ENCODE measurements at regions of chr5 and their contacts with region 1.

Region 1: GRCh38 chr5:171418316-171418981 is 998 bp upstream of the FGF18 start:
- DNase-seq: peak; percentile 60 to 85
- H3K4me3 ChIP-seq: peak overlapping the region; percentile 25
- H3K4me1 ChIP-seq: peaks cover 2% of the 10 kb centered on the region; the same call in 1 of the 2 replicates
- H3K27me3 ChIP-seq: peaks cover 10% of the 10 kb centered on the region

Region 2: DNA sequence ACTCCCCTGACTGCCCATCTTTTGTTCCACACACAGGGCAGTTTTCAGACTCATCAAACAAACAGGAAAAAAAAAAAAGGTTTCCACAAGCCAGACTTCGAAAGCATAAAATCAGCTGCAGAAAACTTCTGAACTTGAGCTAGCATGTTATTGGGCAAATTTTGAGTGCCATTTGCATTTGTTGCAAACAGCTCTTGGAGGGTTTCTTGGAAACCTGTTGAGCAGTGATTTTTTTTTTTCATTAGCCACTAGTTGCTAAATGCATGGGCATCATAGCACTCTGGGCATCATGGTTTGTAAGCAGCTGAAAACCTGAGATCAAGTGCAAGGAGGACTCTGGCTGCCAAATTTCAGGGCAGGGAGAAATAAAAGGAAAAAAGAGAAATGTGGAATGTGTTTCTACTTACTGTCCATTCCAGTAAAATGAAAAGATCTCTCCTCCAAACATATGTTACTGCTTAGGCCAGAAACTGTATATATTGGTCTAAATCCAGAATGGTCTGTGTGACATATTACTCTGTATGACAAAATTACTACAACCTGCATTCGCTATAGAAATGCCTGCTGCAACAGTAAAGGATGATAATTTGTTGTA is 282.0 kb after region 1 on chr5:
- in situ Hi-C with region 1: no loop called
- DNase-seq: no peak
- H3K4me3 ChIP-seq: no peak overlapping the region
- H3K4me1 ChIP-seq: no peaks in the 10 kb centered on the region
- H3K27me3 ChIP-seq: no peaks in the 10 kb centered on the region

Region 3: DNA sequence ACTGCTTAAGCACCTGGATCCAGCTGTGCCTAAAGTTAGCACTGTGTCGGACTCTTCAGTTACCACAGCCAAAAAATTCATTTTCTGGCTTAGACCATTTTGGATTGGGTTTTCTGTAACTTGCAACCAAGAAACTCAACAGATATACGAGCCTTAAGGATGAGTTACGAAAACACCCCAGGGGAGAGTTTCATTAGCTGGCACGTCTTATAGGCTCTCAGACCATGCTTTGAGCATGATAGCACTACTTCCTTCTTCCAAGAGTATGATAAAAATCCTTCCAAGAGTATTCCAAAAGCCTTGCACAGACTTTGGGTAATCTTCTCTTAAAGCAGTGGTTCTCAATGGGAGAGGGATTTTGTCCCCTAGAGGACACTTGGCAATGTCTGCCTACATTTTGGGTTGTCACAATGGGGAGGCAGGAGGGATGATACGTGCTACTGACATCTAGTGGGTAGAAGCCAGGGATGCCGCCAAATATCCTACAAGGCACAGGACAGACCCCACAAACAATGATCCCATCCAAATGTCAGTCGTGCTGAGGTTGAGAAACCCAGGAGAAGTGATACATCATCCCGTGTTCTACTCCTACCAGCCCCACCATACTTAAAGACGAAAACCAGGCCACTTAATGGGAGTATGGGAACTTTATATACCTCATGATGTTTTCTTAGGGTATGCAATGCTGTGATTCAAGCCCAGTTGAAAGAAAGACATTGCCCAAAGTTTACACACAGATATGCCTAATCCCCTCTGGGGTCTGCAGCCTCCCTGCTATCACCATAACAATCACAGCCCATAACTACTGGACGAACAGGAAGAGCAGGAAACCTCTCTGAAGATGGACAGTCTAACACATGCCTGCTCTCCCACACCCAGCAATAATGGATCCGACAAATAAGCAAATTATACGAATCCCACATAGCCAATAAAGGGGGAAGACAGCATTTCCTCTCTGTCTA is 432.2 kb after region 1 on chr5:
- in situ Hi-C with region 1: loop called (anchors 10 kb)
- DNase-seq: peak; percentile 20 to 41
- H3K4me3 ChIP-seq: no peak overlapping the region
- H3K4me1 ChIP-seq: no peaks in the 10 kb centered on the region
- H3K27me3 ChIP-seq: no peaks in the 10 kb centered on the region

Region 4: DNA sequence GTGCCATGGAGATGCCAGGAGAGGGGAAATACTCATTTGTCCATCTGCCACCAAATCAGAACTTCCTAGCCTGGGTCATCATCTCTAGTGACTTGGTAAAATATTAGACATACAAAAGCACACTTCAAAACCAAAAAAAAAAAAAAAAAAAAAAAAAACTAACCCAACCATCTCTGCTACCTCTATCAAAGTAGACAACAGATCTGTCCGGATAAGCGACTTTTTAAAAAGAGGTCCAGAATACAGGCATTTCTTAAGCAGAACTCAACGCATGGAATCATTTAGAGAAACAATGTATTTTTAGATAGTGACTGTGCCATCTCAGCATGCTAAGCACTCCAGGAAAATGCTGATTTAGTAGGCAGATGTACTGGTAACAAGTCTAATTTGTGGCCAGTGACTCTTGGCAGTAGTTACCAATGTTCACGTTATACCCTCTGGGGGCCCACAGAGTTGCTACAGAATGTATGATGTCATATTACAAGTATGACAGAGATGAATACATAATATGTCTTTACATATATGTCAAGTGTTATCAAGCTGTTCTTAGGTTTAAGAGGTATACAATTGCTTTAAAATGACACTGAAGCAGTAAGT is 474.9 kb after region 1 on chr5:
- in situ Hi-C with region 1: loop called (anchors 10 kb)
- DNase-seq: no peak
- H3K4me3 ChIP-seq: no peak overlapping the region
- H3K4me1 ChIP-seq: no peaks in the 10 kb centered on the region
- H3K27me3 ChIP-seq: no peaks in the 10 kb centered on the region

Region 5: DNA sequence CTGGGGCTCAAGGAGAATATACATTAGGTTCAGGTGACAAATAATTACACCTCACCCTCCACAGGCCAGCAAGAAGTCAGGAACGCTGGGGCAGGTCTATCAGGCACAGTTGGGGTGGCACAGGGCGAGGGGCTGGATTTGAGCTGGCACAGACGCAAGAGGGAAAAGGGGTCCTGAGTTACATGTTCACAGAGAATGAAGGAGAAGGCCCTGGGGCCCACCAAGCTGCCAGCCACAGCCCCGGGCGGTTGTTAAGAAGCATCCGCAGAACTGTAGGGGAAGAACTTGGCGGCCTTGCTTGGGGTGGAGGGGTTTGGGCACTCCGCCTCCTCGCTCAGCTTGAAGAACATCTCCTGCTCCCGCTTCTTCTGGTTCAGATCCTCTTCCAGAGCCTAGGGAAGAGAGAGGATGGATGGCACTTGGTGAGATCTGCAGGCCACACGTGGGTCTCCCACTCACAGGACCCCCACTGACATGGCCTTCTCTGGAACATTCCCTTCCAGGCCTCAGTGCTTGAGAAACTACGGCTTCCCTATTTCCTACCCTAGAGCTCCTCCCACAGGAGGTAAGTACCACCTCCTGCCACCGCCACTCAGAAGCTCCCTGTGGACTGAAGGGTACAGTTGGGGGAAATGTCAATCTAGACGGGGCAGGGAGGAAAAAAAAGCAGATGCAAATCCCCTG is 626.3 kb after region 1 on chr5:
- in situ Hi-C with region 1: loop called (anchors 5 kb)
- DNase-seq: no peak
- H3K4me3 ChIP-seq: no peak overlapping the region
- H3K4me1 ChIP-seq: peaks cover 2% of the 10 kb centered on the region
- H3K27me3 ChIP-seq: no peaks in the 10 kb centered on the region